Activated T-helper 2 cell treated with anti-CD3 and anti-CD28 coated beads, Interferon-gamma antibody, Interleukin-2, Interleukin-4, amounts not matched to agents 10 μg/mL and 5 μg/mL and 100 μg/mL, durations not matched to agents 14 hours and 24 hours and 36 hours (primary cell): ENCODE measurements at regions of chr4 and their contacts with region 1.

Region 1: GRCh38 chr4:122151982-122152710 is at the start of gene BLTP1:
- DNase-seq: peak; percentile 85
- H3K4me3 Mint-ChIP-seq: peak within 1 kb of the TSS; percentile 98
- H3K27ac Mint-ChIP-seq: peak within 1 kb of the TSS; percentile 92
- H3K4me1 Mint-ChIP-seq: peaks cover 50% of the 10 kb centered on the region
- H3K27me3 Mint-ChIP-seq: no peaks in the 10 kb centered on the region
- total RNA-seq, gene BLTP1: 28.1 and 32.6 TPM in 2 replicates

Region 2: GRCh38 chr4:121860121-121860520 is 292.0 kb before region 1 on chr4:
- intact Hi-C with region 1: no loop called
- DNase-seq: no peak
- H3K4me3 Mint-ChIP-seq: no peak overlapping the region
- H3K27ac Mint-ChIP-seq: no peak overlapping the region
- H3K4me1 Mint-ChIP-seq: peaks cover 4% of the 10 kb centered on the region
- H3K27me3 Mint-ChIP-seq: no peaks in the 10 kb centered on the region

Region 3: GRCh38 chr4:121950212-121950679 is 201.9 kb before region 1 on chr4:
- intact Hi-C with region 1: loop called (anchors 5 kb)
- DNase-seq: peak; percentile 71
- H3K4me3 Mint-ChIP-seq: peak overlapping the region; percentile 82
- H3K27ac Mint-ChIP-seq: no peak overlapping the region
- H3K4me1 Mint-ChIP-seq: peaks cover 14% of the 10 kb centered on the region
- H3K27me3 Mint-ChIP-seq: peaks cover 63% of the 10 kb centered on the region

Region 4: DNA sequence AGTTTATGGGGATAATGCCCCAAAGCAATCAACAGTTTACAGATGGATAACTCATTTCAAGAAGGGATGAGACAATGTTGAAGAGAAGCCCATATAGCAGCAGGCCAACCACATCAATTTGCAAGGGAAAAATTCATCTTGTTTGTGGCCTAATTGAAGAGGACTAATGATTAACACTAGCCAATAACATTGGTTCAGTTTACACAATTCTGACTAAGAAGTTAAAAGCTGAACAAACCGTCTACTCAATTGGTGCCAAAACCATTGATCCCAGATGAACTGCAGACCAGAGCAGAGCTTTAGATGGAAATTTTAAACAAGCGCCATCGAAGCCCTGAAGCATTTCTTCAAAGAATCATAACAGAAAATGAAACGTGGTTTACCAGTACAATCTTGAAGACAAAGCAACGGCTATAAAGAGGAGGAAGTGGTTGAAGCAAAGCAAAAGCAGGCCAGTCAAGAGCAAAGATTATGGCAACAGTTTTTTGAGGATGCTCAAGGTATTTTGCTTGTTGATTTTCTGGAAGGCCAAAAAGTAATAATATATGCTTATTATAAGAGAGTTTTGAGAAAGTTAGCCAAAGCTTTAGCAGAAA is 20.5 kb before region 1 on chr4:
- intact Hi-C with region 1: loop called (anchors 2 kb)
- DNase-seq: no peak
- H3K4me3 Mint-ChIP-seq: no peak overlapping the region
- H3K27ac Mint-ChIP-seq: peak overlapping the region; percentile 58
- H3K4me1 Mint-ChIP-seq: peaks cover 29% of the 10 kb centered on the region
- H3K27me3 Mint-ChIP-seq: peaks cover 2% of the 10 kb centered on the region

Region 5: GRCh38 chr4:122500852-122501501 is 348.8 kb after region 1 on chr4:
- intact Hi-C with region 1: loop called (anchors 5 kb)
- DNase-seq: no peak
- H3K4me3 Mint-ChIP-seq: no peak overlapping the region
- H3K27ac Mint-ChIP-seq: no peak overlapping the region
- H3K4me1 Mint-ChIP-seq: peaks cover 37% of the 10 kb centered on the region
- H3K27me3 Mint-ChIP-seq: peaks cover 11% of the 10 kb centered on the region

Region 6: GRCh38 chr4:122758033-122758432 is 605.9 kb after region 1 on chr4:
- intact Hi-C with region 1: no loop called
- DNase-seq: no peak
- H3K4me3 Mint-ChIP-seq: no peak overlapping the region
- H3K27ac Mint-ChIP-seq: no peak overlapping the region
- H3K4me1 Mint-ChIP-seq: peaks cover 15% of the 10 kb centered on the region
- H3K27me3 Mint-ChIP-seq: peaks cover 23% of the 10 kb centered on the region